ENCODE measurements at regions of chr17 and their contacts with region 1.

Region 1: GRCh38 chr17:50853015-50853615 is 13.0 kb downstream of the TOB1 start:
- DNase-seq: no peak
- ATAC-seq: no peak
- H3K4me3 Mint-ChIP-seq: no peak overlapping the region
- H3K27ac Mint-ChIP-seq: peak overlapping the region; percentile 3; the same call in 1 of the 2 replicates
- H3K4me1 Mint-ChIP-seq: peaks cover 11% of the 10 kb centered on the region
- H3K27me3 Mint-ChIP-seq: no peaks in the 10 kb centered on the region; the same call in 1 of the 2 replicates
- CTCF ChIP-seq: no peak

Region 2: GRCh38 chr17:50931144-50931908 is 78.2 kb after region 1 on chr17:
- CTCF ChIA-PET with region 1: interaction called, 14 read pairs
- POLR2A ChIA-PET with region 1: interaction called, 4 read pairs
- DNase-seq: peak; percentile 74
- ATAC-seq: peak; percentile 91
- H3K4me3 Mint-ChIP-seq: peak overlapping the region; percentile 75
- H3K27ac Mint-ChIP-seq: no peak overlapping the region
- H3K4me1 Mint-ChIP-seq: peaks cover 18% of the 10 kb centered on the region
- H3K27me3 Mint-ChIP-seq: peaks cover 28% of the 10 kb centered on the region
- CTCF ChIP-seq: no peak

Region 3: GRCh38 chr17:50944054-50944901 is 91.2 kb after region 1 on chr17:
- CTCF ChIA-PET with region 1: interaction called, 58 read pairs
- POLR2A ChIA-PET with region 1: interaction called, 4 read pairs
- DNase-seq: peak; percentile 65
- ATAC-seq: peak; percentile 59
- H3K4me3 Mint-ChIP-seq: peak overlapping the region; percentile 54
- H3K27ac Mint-ChIP-seq: no peak overlapping the region
- H3K4me1 Mint-ChIP-seq: peaks cover 24% of the 10 kb centered on the region
- H3K27me3 Mint-ChIP-seq: peaks cover 15% of the 10 kb centered on the region
- CTCF ChIP-seq: no peak

Region 4: GRCh38 chr17:50949989-50950881 is 97.1 kb after region 1 on chr17:
- CTCF ChIA-PET with region 1: interaction called, 80 read pairs
- POLR2A ChIA-PET with region 1: no interaction called
- DNase-seq: peak; percentile 80
- ATAC-seq: peak; percentile 79
- H3K4me3 Mint-ChIP-seq: peak overlapping the region; percentile 14; the same call in 1 of the 2 replicates
- H3K27ac Mint-ChIP-seq: peak overlapping the region; percentile 58; the same call in 1 of the 2 replicates
- H3K4me1 Mint-ChIP-seq: peaks cover 64% of the 10 kb centered on the region
- H3K27me3 Mint-ChIP-seq: no peaks in the 10 kb centered on the region
- CTCF ChIP-seq: peak; percentile 53